ENCODE measurements at regions of chr21 and their contacts with region 1.

Region 1: DNA sequence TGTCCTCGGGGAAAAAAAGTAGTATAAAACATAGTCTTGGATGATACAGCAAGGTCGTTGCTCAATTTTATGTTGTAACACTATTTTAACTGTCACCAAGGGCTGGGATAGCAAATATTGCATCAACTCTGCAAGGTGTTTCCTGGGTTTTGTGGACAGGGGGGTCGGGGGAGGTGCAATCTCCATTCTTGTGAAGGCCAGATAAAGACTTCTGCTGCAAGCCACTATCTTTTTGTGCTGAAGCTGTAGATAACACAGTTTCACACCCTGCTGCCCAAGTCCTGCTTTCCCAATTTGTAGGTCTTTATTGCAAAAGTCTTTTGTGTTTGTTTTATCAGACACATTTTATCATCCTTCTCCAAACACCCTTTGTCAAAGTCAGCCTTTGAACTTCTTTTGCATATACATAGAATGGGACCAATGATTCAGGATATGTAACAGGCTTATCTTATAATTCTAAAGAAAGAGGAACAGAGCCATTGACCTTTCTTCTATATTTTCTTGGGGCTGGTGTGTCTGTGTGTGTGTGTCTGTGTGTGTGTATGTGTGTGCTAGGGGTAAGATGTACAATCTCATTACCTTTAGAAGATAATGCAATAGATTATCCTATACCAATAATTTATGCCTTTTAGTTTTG is 140.6 kb downstream of the RUNX1 start:
- DNase-seq: peak; percentile 92 to 98 (median 93)
- ATAC-seq: peak; percentile 79
- H3K4me3 ChIP-seq: no peak overlapping the region
- H3K27ac ChIP-seq: peak overlapping the region; percentile 86
- H3K4me1 ChIP-seq: peaks cover 37 to 75% of the 10 kb centered on the region in 2 experiments
- H3K27me3 ChIP-seq: no peaks in the 10 kb centered on the region
- CTCF ChIP-seq: no peak
- EP300 ChIP-seq: peak; percentile 100
- POLR2A ChIP-seq: no peak
- RAD21 ChIP-seq: peak; percentile 46 to 49

Region 2: DNA sequence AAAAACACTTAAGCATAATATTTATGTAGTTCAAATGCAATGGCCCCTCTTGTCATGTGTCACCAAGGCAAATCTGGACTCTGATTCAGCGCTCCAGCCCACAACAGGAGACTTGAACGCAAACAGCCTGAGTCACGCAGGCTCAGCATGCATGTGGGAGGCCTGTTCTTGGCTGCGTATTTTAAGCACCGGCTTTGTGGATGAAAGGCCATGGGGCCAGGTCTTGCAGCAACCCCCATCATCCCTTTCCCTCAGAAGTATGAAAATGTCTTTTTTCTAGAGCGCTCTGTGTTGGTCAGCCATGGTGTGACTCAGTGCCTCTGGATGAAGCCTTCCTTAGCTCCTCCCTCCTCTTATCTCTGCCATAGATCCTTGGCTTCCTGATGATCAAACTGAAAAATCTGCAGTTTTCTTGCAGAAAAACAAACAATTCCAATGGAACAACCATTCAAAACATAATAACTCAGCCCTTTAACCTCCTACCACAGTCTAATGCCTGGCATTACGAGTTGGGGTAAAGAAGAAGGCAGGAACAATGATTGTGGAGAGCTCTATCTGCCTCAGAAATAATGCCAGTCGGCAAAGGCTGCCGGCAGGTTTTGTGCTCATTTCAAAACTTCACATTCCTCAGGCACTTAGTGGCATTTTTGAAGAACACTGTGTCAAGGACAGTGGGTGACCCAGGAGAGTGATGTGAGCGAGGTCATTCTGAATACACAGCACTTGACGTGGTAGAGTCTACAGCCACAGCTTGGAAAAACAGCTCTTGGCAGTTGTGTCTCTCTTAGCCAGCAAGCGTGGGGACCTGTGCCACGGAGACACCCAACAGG is 72.2 kb before region 1 on chr21:
- CTCF ChIA-PET with region 1: no interaction called
- POLR2A ChIA-PET with region 1: no interaction called
- in situ Hi-C with region 1: no loop called
- intact Hi-C with region 1: no loop called
- DNase-seq: no peak
- ATAC-seq: no peak; the same call in 1 of the 3 replicates
- H3K4me3 ChIP-seq: no peak overlapping the region
- H3K27ac ChIP-seq: no peak overlapping the region
- H3K4me1 ChIP-seq: no peaks in the 10 kb centered on the region
- H3K27me3 ChIP-seq: no peaks in the 10 kb centered on the region
- CTCF ChIP-seq: no peak
- EP300 ChIP-seq: no peak
- POLR2A ChIP-seq: no peak
- RAD21 ChIP-seq: no peak

Region 3: GRCh38 chr21:34857874-34858273 is 50.7 kb before region 1 on chr21:
- CTCF ChIA-PET with region 1: no interaction called
- POLR2A ChIA-PET with region 1: no interaction called
- in situ Hi-C with region 1: no loop called
- intact Hi-C with region 1: no loop called
- DNase-seq: no peak
- ATAC-seq: peak; percentile 32; the same call in 2 of the 3 replicates
- H3K4me3 ChIP-seq: no peak overlapping the region
- H3K27ac ChIP-seq: no peak overlapping the region
- H3K4me1 ChIP-seq: no peaks in the 10 kb centered on the region
- H3K27me3 ChIP-seq: no peaks in the 10 kb centered on the region
- CTCF ChIP-seq: peak; percentile 8 to 21 (median 19); a peak in 1 of 6 replicates
- EP300 ChIP-seq: no peak
- POLR2A ChIP-seq: no peak
- RAD21 ChIP-seq: no peak

Region 4: DNA sequence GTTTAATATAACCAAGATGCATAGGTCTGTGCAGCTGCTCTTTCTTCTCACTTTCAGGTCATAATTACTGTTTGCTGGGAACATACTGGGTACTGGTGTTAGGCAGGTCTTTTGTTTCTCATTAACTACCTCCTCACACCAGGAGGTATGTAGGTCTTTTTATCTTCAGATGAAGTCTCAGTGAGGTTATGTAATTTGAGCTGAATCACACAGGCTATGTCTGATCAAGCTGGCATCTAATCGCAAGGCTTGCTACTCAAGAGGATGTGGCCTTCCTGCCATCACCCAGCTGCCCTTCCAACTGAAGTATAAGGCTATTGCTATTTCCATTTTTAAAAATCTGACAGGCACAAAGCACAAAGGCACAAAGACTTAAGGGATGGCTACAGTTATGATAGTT is 44.2 kb after region 1 on chr21:
- CTCF ChIA-PET with region 1: no interaction called
- POLR2A ChIA-PET with region 1: no interaction called
- in situ Hi-C with region 1: no loop called
- intact Hi-C with region 1: loop called (anchors 5 kb)
- DNase-seq: no peak
- ATAC-seq: no peak
- H3K4me3 ChIP-seq: no peak overlapping the region
- H3K27ac ChIP-seq: no peak overlapping the region
- H3K4me1 ChIP-seq: peaks cover 12 to 33% of the 10 kb centered on the region in 2 experiments
- H3K27me3 ChIP-seq: no peaks in the 10 kb centered on the region
- CTCF ChIP-seq: no peak
- EP300 ChIP-seq: no peak
- POLR2A ChIP-seq: no peak
- RAD21 ChIP-seq: no peak

Region 5: GRCh38 chr21:34996304-34997101 is 88.0 kb after region 1 on chr21:
- CTCF ChIA-PET with region 1: no interaction called
- POLR2A ChIA-PET with region 1: interaction called, 3 read pairs
- in situ Hi-C with region 1: no loop called
- intact Hi-C with region 1: loop called (anchors 5 kb)
- DNase-seq: peak; percentile 55 to 92 (median 68)
- ATAC-seq: peak; percentile 79
- H3K4me3 ChIP-seq: no peak overlapping the region
- H3K27ac ChIP-seq: peak overlapping the region; percentile 75
- H3K4me1 ChIP-seq: peaks cover 38 to 66% of the 10 kb centered on the region in 2 experiments
- H3K27me3 ChIP-seq: no peaks in the 10 kb centered on the region
- CTCF ChIP-seq: no peak
- EP300 ChIP-seq: peak; percentile 66; the same call in 1 of the 2 replicates
- POLR2A ChIP-seq: no peak
- RAD21 ChIP-seq: no peak

Region 6: GRCh38 chr21:35026617-35027562 is 118.4 kb after region 1 on chr21:
- CTCF ChIA-PET with region 1: no interaction called
- POLR2A ChIA-PET with region 1: no interaction called
- in situ Hi-C with region 1: no loop called
- intact Hi-C with region 1: loop called (anchors 1 kb)
- DNase-seq: peak; percentile 84 to 99 (median 86)
- ATAC-seq: peak; percentile 96
- H3K4me3 ChIP-seq: peak overlapping the region; percentile 28
- H3K27ac ChIP-seq: peak overlapping the region; percentile 95
- H3K4me1 ChIP-seq: peaks cover 31 to 47% of the 10 kb centered on the region in 2 experiments
- H3K27me3 ChIP-seq: no peaks in the 10 kb centered on the region
- CTCF ChIP-seq: peak in 2 of 3 experiments; percentile 18 to 30; a peak in 4 of 6 replicates
- EP300 ChIP-seq: peak; percentile 100
- POLR2A ChIP-seq: peak; percentile 79
- RAD21 ChIP-seq: peak; percentile 45 to 57

Region 7: DNA sequence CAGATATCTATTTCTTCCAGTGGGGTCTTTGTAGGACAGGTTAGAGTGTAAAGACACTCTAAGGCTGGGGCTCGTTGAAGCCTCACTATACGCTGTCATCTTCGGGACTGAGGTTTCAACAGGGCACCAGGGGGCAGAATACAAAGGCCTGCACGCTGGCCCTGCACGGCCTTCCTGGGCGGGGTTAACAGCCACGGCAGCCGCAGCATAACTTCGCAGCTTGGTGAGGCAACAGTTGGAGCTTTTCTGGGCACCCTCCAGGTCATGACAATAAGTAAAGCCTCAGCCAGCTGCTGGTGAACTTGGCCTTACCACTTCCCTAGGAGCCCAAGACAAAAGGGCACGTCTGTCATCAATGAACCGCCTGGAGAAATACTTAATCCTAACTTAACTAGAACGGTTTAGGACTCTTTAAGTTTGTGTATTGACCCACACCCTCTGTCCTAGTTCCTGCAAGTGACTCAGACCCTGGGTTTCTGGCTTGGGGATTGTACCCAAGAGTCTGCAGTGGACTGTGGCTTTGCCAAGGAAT is 142.8 kb after region 1 on chr21:
- CTCF ChIA-PET with region 1: no interaction called
- POLR2A ChIA-PET with region 1: no interaction called
- in situ Hi-C with region 1: no loop called
- intact Hi-C with region 1: loop called (anchors 5 kb)
- DNase-seq: peak; percentile 82 to 95 (median 88)
- ATAC-seq: peak; percentile 98
- H3K4me3 ChIP-seq: no peak overlapping the region
- H3K27ac ChIP-seq: peak overlapping the region; percentile 70
- H3K4me1 ChIP-seq: peaks cover 18 to 50% of the 10 kb centered on the region in 2 experiments
- H3K27me3 ChIP-seq: no peaks in the 10 kb centered on the region
- CTCF ChIP-seq: peak; percentile 87 to 90 (median 87)
- EP300 ChIP-seq: peak; percentile 55; the same call in 1 of the 2 replicates
- POLR2A ChIP-seq: 0 out of 2 replicates have a peak, but pooled peaks have one; percentile 45
- RAD21 ChIP-seq: peak; percentile 94 to 95

Region 8: GRCh38 chr21:35102488-35103371 is 194.2 kb after region 1 on chr21:
- CTCF ChIA-PET with region 1: no interaction called
- POLR2A ChIA-PET with region 1: no interaction called
- in situ Hi-C with region 1: no loop called
- intact Hi-C with region 1: loop called (anchors 5 kb)
- DNase-seq: peak; percentile 39 to 82 (median 58)
- ATAC-seq: peak; percentile 50
- H3K4me3 ChIP-seq: no peak overlapping the region
- H3K27ac ChIP-seq: peak overlapping the region; percentile 70
- H3K4me1 ChIP-seq: peaks cover 37 to 77% of the 10 kb centered on the region in 2 experiments
- H3K27me3 ChIP-seq: no peaks in the 10 kb centered on the region
- CTCF ChIP-seq: no peak
- EP300 ChIP-seq: peak; percentile 5; the same call in 1 of the 2 replicates
- POLR2A ChIP-seq: no peak
- RAD21 ChIP-seq: no peak; a peak in 1 of 4 replicates

Region 9: DNA sequence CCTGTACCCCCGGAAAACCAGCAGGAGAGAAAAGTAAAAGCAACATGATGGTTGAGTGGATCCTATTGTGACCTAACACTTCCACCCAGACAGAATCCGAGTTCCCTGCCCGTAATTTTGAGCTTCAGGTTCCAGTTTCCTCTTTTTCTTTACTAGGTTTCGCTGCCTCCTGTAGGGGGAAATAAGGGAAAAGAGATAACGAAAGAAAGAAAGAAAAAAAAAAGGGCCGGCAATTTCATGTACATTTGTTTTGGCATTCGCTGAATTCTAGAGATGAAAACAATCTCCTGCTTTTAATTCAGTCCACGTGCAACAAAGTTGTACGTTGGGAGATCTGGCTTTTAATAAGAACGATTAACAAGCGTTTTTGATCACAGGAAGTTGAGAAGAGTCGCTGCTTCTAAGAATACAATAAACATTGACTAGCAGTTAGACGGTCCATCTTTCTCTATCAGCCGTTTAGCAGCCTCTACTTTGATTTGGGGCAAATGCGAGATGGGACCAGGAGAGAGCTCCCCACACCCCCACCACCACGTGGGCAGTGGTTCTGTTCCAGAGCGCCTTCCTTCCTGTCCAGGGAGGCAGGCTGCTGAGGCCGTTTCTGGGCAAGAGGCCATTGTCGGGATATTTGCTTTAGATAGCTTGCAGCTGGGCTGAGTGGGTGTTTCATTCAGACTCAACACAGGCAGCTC is 296.5 kb after region 1 on chr21:
- CTCF ChIA-PET with region 1: no interaction called
- POLR2A ChIA-PET with region 1: no interaction called
- in situ Hi-C with region 1: no loop called
- intact Hi-C with region 1: loop called (anchors 5 kb)
- DNase-seq: peak; percentile 69 to 85 (median 73)
- ATAC-seq: peak; percentile 75
- H3K4me3 ChIP-seq: peak overlapping the region; percentile 18
- H3K27ac ChIP-seq: peak overlapping the region; percentile 85
- H3K4me1 ChIP-seq: peaks cover 24 to 48% of the 10 kb centered on the region in 2 experiments
- H3K27me3 ChIP-seq: no peaks in the 10 kb centered on the region
- CTCF ChIP-seq: peak; percentile 26 to 52 (median 42); a peak in 4 of 6 replicates
- EP300 ChIP-seq: no peak; the same call in 1 of the 2 replicates
- POLR2A ChIP-seq: no peak; the same call in 1 of the 2 replicates
- RAD21 ChIP-seq: peak; percentile 56 to 62